ENCODE measurements at regions of chr6 and their contacts with region 1.

Region 1: GRCh38 chr6:16183187-16183664 is 54.3 kb downstream of the MYLIP start:
- DNase-seq: no peak
- H3K4me3 ChIP-seq: no peak overlapping the region
- H3K27ac ChIP-seq: no peak overlapping the region
- H3K4me1 ChIP-seq: peaks cover 0 to 8% of the 10 kb centered on the region in 2 donors
- H3K27me3 ChIP-seq: no peaks in the 10 kb centered on the region
- CTCF ChIP-seq: peak; percentile 67 to 89 (median 80)
- POLR2A ChIP-seq: no peak

Region 2: DNA sequence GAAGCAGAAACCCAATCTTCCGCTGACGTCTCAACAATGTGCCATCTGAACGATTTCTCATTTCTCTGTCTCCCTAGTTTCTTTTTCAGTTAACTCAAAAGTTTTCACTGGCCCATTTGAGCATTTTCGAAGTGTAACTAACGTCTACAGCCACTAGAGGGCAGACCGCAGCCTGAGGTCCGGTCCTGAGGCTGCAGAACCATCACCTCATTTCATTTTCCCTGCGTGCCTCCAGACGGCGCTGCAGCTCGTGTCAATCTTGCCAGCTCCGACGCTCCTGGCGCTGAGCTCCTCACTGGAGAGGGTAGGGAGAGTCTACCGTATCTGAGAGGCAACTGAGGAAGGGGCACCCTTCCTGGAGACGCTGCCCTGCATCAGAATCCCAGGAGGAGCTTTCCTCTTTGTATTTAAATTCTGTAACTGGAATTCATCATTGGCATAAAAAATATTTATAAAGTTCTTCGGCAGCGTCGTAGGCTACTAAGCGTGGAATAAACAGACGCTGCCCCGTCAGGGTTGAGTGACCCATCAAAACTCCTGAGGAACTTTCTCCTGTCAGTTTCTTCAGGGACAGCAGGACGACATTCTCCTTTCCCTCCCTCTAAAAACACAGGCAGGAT is 491.9 kb before region 1 on chr6:
- intact Hi-C with region 1: loop called in 1 of 2 experiments (anchors 5 kb)
- DNase-seq: peak; percentile 82 to 93 (median 87)
- H3K4me3 ChIP-seq: peak overlapping the region in 2 of 4 donors; percentile 15 to 39
- H3K27ac ChIP-seq: no peak overlapping the region
- H3K4me1 ChIP-seq: peaks cover 0 to 7% of the 10 kb centered on the region in 2 donors
- H3K27me3 ChIP-seq: no peaks in the 10 kb centered on the region
- CTCF ChIP-seq: peak; percentile 99 to 100 (median 100)
- POLR2A ChIP-seq: no peak

Region 3: GRCh38 chr6:16128759-16129622 is 54.2 kb before region 1 on chr6 and contains the start of gene MYLIP:
- intact Hi-C with region 1: loop called in 1 of 2 experiments (anchors 10 kb)
- DNase-seq: peak; percentile 98 to 99 (median 99)
- H3K4me3 ChIP-seq: peak within 1 kb of the TSS; percentile 74 to 99 (median 86)
- H3K27ac ChIP-seq: peak within 1 kb of the TSS; percentile 42 to 95 (median 92)
- H3K4me1 ChIP-seq: peaks cover 16 to 29% of the 10 kb centered on the region in 2 donors
- H3K27me3 ChIP-seq: no peaks in the 10 kb centered on the region
- CTCF ChIP-seq: peak; percentile 35 to 89 (median 72)
- POLR2A ChIP-seq: peak; percentile 99 to 100
- total RNA-seq, gene MYLIP: 8.6 to 49.2 (median 37.6) TPM

Region 4: DNA sequence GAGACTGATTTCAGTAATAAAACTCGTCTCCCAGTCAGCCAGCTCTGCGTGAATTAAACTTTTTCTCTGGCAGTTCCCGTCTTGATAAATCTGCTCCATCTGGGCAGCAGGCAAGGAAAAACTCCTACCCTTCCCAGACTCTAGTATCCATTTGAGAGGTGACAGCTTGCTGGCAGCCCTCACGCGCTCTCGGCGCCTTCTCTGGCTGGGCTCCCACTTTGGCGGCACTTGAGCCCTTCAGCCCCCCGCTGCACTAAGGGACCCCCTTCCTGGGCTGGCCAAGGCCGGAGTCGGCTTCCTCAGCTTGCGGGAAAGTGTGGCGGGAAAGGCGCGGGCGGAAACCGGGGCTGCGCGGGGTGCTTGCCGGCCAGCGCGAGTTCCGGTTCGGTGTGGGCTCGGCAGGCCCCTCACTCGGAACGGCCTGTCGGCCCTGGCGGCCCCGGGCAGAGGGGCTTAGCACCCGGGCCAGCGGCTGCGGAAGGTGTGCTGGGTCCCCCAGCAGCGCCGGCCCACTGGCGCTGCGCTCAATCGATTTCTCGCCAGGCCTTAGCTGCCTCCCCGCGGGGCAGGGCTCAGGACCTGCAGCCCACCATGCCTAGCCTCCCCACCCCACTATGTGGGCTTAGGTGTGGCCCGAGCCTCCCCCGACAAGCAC is 33.4 kb after region 1 on chr6:
- intact Hi-C with region 1: no loop called
- DNase-seq: no peak
- H3K4me3 ChIP-seq: peak overlapping the region in 1 of 4 donors; percentile 38
- H3K27ac ChIP-seq: peak overlapping the region in 1 of 5 donors; percentile 26
- H3K4me1 ChIP-seq: peaks cover 16 to 23% of the 10 kb centered on the region in 2 donors
- H3K27me3 ChIP-seq: no peaks in the 10 kb centered on the region
- CTCF ChIP-seq: no peak
- POLR2A ChIP-seq: no peak

Region 5: GRCh38 chr6:16292942-16293341 is 109.7 kb after region 1 on chr6:
- intact Hi-C with region 1: no loop called
- DNase-seq: no peak
- H3K4me3 ChIP-seq: no peak overlapping the region
- H3K27ac ChIP-seq: no peak overlapping the region
- H3K4me1 ChIP-seq: no peaks in the 10 kb centered on the region
- H3K27me3 ChIP-seq: no peaks in the 10 kb centered on the region
- CTCF ChIP-seq: no peak
- POLR2A ChIP-seq: no peak

Region 6: GRCh38 chr6:16322666-16323312 is 139.6 kb after region 1 on chr6:
- intact Hi-C with region 1: no loop called
- DNase-seq: peak in 6 of 7 donors; percentile 49 to 91 (median 62)
- H3K4me3 ChIP-seq: no peak overlapping the region
- H3K27ac ChIP-seq: peak overlapping the region in 2 of 5 donors; percentile 38 to 55
- H3K4me1 ChIP-seq: peaks cover 16 to 47% of the 10 kb centered on the region in 2 donors
- H3K27me3 ChIP-seq: no peaks in the 10 kb centered on the region
- CTCF ChIP-seq: no peak
- POLR2A ChIP-seq: peak in 1 of 2 donors; percentile 32

Region 7: GRCh38 chr6:16471222-16471909 is 288.1 kb after region 1 on chr6:
- intact Hi-C with region 1: no loop called
- DNase-seq: no peak
- H3K4me3 ChIP-seq: no peak overlapping the region
- H3K27ac ChIP-seq: no peak overlapping the region
- H3K4me1 ChIP-seq: no peaks in the 10 kb centered on the region
- H3K27me3 ChIP-seq: no peaks in the 10 kb centered on the region
- CTCF ChIP-seq: no peak
- POLR2A ChIP-seq: no peak